Activated CD8-positive, alpha-beta memory T cell treated with anti-CD3 and anti-CD28 coated beads, Interleukin-2, amount 10 ng/mL, durations not matched to agents 7 days and 5 days (primary cell): ENCODE measurements at regions of chr1 and their contacts with region 1.

Region 1: GRCh38 chr1:9784508-9785133 is 39.1 kb downstream of the CLSTN1 start:
- DNase-seq: peak; percentile 81
- ATAC-seq: peak; percentile 27
- H3K4me3 Mint-ChIP-seq: no peak overlapping the region
- H3K27ac Mint-ChIP-seq: peak overlapping the region; percentile 54
- H3K4me1 Mint-ChIP-seq: peaks cover 47% of the 10 kb centered on the region
- H3K27me3 Mint-ChIP-seq: no peaks in the 10 kb centered on the region

Region 2: GRCh38 chr1:9473032-9473792 is 311.4 kb before region 1 on chr1:
- CTCF ChIA-PET with region 1: no interaction called
- DNase-seq: no peak
- ATAC-seq: no peak
- H3K4me3 Mint-ChIP-seq: no peak overlapping the region
- H3K27ac Mint-ChIP-seq: no peak overlapping the region
- H3K4me1 Mint-ChIP-seq: no peaks in the 10 kb centered on the region
- H3K27me3 Mint-ChIP-seq: peaks cover 26% of the 10 kb centered on the region

Region 3: DNA sequence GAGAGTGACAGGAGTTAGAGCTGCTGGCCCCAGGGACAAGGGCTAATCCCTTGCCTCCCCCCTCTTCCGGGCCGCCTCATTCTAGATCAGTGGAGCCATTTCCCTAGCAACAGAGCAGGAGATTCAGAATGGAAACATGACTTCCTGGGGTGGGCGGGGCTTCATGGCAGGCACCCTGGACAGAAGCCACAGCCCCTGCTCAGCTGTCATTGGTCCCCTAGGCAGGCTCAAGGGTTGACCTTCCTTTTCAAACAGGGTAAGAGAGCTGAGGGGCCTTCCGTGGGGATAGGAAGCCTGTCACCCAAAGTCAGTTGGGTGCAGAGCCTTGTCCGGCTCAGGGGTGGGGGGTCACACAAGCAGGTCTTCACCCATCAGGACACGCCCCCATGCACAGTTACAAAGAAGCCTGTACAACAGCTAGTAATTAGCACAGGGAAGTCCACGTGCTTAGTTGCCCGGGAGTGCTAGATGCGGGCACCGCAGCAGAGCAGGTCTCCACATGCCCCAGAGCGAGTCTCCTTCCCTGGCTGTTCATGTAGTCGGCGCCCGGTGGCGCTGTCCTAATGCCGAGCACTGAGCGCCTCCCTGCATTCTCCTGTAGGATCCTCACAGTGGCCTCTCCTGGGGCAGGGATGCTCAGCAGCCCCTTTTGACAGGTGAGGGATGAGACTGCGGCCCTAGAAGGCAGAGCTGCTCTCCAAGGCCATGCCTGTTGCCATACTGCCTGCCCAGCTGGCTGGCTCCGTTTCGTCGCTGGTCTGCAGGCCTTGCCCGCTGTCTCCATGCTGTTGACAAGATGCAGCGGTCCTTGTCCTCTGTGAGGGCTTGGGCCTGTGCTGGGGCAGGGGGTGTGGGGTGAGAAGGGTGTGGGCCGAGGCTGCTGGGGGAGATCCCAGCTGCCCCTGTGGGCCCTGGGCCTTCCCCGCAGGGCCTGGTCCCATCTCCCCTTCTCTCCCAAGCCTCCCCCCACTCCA is 190.8 kb before region 1 on chr1:
- CTCF ChIA-PET with region 1: no interaction called
- DNase-seq: peak; percentile 73
- ATAC-seq: peak; percentile 21
- H3K4me3 Mint-ChIP-seq: no peak overlapping the region
- H3K27ac Mint-ChIP-seq: peak overlapping the region; percentile 71
- H3K4me1 Mint-ChIP-seq: peaks cover 30% of the 10 kb centered on the region
- H3K27me3 Mint-ChIP-seq: no peaks in the 10 kb centered on the region

Region 4: DNA sequence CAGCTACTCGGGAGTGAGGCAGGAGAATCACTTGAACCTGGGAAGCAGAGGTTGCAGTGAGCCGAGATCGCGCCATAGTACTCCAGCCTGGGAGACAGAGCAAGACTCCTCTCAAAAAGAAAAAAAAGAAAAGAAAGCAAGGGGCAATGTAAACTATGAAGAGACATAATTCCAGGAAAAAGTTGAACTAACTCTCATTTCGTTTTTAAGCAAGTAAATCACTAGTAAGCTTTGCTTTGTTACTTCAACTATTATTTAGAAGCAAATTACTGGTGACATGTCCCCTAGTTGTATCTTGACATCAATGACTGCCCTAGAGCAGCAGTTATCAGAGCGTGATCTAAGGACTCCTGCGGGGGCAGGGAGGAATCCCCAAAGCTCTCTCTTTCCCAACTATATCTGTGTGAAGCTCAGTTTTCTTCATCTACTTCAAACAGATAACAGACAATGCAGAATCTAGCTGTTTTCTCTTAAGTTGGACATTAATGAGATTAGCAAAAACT is 20.4 kb after region 1 on chr1:
- CTCF ChIA-PET with region 1: interaction called, 48 read pairs
- DNase-seq: no peak
- ATAC-seq: no peak
- H3K4me3 Mint-ChIP-seq: no peak overlapping the region
- H3K27ac Mint-ChIP-seq: no peak overlapping the region
- H3K4me1 Mint-ChIP-seq: peaks cover 32% of the 10 kb centered on the region
- H3K27me3 Mint-ChIP-seq: no peaks in the 10 kb centered on the region

Region 5: GRCh38 chr1:9852410-9853248 is 68.0 kb after region 1 on chr1:
- CTCF ChIA-PET with region 1: interaction called, 229 read pairs
- DNase-seq: no peak
- ATAC-seq: no peak
- H3K4me3 Mint-ChIP-seq: no peak overlapping the region
- H3K27ac Mint-ChIP-seq: no peak overlapping the region
- H3K4me1 Mint-ChIP-seq: no peaks in the 10 kb centered on the region
- H3K27me3 Mint-ChIP-seq: no peaks in the 10 kb centered on the region

Region 6: DNA sequence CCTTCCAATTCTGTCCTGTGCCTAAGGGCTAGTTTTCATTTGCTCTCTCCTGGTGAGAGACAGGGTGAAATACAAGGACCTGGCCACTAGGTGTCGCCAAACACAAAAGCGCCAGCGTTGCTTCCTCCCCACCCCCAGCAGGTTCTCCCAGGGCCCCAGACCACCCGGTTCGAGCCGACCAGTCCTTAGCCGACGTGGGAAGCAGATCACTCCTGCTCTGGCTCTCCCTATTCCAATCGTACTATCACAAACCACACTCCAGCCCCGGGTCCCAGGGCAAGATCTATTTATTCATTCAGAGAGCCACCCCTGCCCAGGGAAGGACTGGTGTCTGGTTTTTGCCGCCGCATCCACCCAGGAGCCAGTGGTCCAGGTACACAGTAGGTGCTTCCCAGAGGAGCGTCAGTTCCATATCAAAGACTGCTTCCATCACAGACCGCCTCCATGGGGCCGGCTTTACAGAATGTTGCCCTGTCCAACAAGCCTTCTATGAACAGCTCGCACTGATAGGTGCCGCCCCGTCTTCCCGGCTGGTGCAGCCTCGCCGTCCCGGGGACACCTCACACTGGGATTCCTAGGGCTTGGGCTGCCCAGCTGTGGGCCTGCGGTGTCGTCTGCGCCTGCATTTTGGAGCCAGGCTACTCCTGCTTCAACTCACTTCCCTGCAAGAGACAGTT is 90.5 kb after region 1 on chr1:
- CTCF ChIA-PET with region 1: interaction called, 229 read pairs
- DNase-seq: peak; percentile 82
- ATAC-seq: peak; percentile 94
- H3K4me3 Mint-ChIP-seq: no peak overlapping the region
- H3K27ac Mint-ChIP-seq: peak overlapping the region; percentile 65
- H3K4me1 Mint-ChIP-seq: peaks cover 12% of the 10 kb centered on the region
- H3K27me3 Mint-ChIP-seq: no peaks in the 10 kb centered on the region